Posterior vena cava (tissue), 2 donors: ENCODE measurements at regions of chr6 and their contacts with region 1.

Region 1: GRCh38 chr6:136792410-136793262 is at the start of gene MAP3K5:
- DNase-seq: peak; percentile 98
- total RNA-seq, gene MAP3K5: 15.0 to 16.4 TPM

Region 2: GRCh38 chr6:135474362-135474761 is 1318.3 kb before region 1 on chr6:
- intact Hi-C with region 1: loop called in 1 of 2 experiments (anchors 5 kb)
- DNase-seq: no peak

Region 3: DNA sequence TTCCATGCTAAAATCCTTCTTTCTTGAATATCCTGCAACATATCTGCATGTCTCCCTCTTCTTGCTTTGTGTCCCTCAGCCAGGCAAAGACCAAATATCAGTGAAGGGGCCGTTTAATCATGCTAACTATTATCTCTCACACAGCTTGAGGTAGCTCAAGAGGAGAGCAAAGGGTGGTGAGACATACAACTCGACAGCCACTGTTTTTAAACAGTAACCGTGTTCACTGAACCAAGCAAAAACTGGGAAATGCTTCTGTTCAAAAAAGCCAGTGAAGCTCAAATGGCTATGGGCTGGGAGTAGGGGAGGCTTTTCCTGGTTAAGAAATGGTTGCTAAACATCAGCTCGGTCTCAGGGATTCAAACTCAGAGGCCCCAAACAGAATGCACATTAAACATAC is 325.9 kb before region 1 on chr6:
- intact Hi-C with region 1: no loop called
- DNase-seq: no peak

Region 4: GRCh38 chr6:136582711-136583471 is 209.7 kb before region 1 on chr6:
- intact Hi-C with region 1: loop called (anchors 5 to 10 kb)
- DNase-seq: no peak

Region 5: GRCh38 chr6:136643850-136644596 is 148.6 kb before region 1 on chr6:
- intact Hi-C with region 1: loop called (anchors 2 to 5 kb)
- DNase-seq: peak; percentile 94

Region 6: DNA sequence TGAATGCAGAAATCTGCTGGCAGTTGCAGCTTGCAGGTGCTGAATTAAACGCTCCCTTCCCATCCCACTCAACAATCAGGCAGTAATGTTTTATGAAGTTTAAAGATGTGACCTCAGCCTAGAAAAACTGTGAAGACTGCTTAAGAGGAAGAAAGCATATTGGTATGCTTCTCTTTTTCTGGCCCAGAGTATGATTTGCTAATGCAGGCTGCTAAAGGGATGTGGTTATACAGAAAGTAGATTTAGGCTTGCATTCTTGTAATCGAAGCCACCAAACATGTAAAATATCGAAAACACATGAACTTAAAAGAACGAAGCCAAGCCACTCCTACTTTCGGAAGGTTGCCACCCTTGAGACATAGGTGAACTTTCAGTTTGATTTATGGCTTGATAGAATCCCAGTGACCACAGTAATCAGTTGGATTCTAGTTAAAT is 41.1 kb before region 1 on chr6:
- intact Hi-C with region 1: no loop called
- DNase-seq: no peak